Dorsolateral prefrontal cortex (tissue), 120 donors: ENCODE measurements at regions of chr2 and their contacts with region 1.

Region 1: DNA sequence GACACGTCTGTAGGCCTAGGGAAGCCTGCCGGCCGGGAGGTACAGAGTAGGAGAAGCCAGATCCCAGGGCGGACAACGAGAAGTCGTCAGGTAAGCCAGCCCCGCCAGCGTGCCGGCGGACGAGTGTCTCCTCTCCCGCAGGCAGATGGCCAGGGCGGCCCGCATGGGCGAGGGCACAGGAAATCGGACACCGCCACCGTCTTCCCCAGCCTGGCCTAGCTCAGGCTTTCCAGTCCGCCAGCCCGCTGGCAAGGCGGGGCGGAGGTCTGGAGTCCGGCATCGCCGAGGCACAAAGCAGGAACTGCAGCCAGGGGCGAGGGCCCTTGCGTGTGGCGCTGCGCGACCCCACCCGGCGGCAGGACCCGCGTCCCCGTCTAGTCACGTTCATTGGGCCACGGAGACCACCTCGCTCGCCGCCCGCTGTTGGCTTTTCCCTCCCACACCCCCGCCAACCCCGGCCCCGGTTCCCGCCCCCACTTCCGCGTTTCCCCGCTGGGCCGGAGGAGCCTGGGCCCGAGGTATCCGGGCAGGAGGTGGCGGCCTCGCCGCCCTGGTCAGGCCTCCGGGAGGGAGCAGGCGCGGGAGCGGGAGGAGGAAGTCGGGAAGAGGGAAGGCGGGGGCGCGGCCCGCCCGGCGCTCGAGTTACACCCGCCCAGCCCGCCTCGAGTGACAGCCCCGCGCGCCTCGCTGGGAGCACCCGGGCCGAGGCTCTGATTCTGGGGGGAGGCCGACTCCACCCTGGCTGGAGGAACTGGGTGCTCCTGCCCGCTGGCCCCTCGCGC is at the start of gene GPD2:
- DNase-seq: peak; percentile 68 to 90 (median 84)
- H3K4me3 ChIP-seq: peak within 1 kb of the TSS; percentile 58 to 99 (median 84)
- H3K27ac ChIP-seq: peak within 1 kb of the TSS; percentile 87 to 99 (median 97)
- H3K27me3 ChIP-seq: no peaks in the 10 kb centered on the region
- CTCF ChIP-seq: peak in 33 of 56 donors; percentile 2 to 55 (median 27)
- total RNA-seq, gene GPD2: 31.2 to 87.8 (median 46.5) TPM

Region 2: DNA sequence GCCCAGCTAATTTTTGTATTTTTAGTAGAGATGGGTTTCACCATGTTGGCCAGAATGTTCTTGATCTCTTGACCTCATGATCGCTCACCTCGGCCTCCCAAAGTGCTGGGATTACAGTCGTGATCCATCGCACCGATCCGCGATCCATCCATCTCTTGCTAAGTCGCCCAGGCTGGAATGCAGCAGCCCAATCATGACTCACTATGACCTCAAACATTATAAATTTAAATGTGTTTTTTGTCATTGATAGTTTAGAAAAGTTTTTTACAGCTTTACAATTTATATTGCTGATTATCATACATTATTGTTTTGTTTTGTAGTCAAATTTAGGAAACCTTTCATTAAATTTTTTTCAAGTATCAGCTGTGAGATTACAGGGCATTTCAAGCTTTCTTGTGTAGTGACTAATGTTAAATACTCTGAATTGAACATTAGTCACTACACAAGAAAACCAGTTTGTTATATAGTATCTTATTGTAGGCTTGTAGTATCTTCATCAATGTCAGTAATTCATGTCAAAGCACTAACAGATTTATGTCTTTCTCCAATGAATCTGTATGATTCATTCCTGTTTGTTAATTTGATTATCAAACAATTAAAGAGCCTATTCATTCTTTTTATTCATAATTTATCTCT is 140.8 kb before region 1 on chr2:
- intact Hi-C with region 1: no loop called
- DNase-seq: no peak
- H3K4me3 ChIP-seq: no peak overlapping the region
- H3K27ac ChIP-seq: no peak overlapping the region
- H3K27me3 ChIP-seq: peaks cover 0 to 11% (median 0%) of the 10 kb centered on the region in 45 donors
- CTCF ChIP-seq: no peak

Region 3: DNA sequence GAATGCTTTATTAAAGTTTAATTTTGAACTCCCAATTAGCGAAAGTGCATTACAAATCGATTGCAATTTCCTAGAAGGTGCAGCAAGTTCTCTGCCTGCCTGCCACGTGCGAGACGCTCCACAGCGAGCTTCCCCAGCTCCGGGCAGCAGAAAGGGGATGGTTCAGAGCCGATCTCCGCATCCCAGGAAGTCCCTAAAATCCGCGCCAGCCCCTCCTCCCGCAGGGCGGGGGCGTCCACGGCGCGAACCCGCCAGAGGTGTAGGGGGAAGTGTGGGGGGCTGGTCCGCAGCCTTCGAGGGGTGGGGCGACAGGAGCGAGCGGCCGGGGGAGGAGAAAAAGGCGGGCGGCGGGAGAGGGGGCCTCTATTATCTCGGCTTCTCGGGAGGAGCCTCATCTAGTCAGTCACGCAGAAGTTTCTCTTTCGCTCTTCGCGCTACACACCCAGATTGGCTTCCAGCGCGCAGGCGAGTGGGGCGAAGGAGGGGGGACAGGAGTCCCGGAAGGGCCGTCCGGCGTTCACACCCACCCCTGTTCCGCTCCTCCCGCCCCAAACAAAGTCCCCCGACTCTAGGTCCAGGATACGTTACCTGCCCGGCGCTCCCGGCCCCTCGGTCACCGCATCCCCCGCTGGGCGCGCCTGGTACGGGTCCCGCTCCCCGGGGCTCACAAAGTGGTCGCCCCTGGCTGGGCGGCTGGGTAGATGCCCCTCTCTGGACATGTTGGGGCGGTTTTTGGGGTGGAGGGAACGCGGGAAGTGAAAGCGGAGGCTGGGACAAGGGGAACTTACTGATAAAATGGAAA is 94.3 kb before region 1 on chr2:
- intact Hi-C with region 1: loop called in 1 of 2 experiments (anchors 2 kb)
- DNase-seq: peak; percentile 61 to 87 (median 82)
- H3K4me3 ChIP-seq: peak overlapping the region; percentile 69 to 97 (median 87)
- H3K27ac ChIP-seq: peak overlapping the region; percentile 94 to 100 (median 100)
- H3K27me3 ChIP-seq: no peaks in the 10 kb centered on the region
- CTCF ChIP-seq: peak in 6 of 56 donors; percentile 1 to 14 (median 8)

Region 4: GRCh38 chr2:156400706-156401678 is 34.9 kb before region 1 on chr2:
- intact Hi-C with region 1: loop called (anchors 1 kb)
- DNase-seq: peak; percentile 62 to 81 (median 68)
- H3K4me3 ChIP-seq: peak overlapping the region; percentile 56 to 98 (median 76)
- H3K27ac ChIP-seq: peak overlapping the region; percentile 81 to 100 (median 98)
- H3K27me3 ChIP-seq: no peaks in the 10 kb centered on the region
- CTCF ChIP-seq: peak in 5 of 56 donors; percentile 5 to 15 (median 8)

Region 5: GRCh38 chr2:156472686-156473085 is 36.8 kb after region 1 on chr2:
- intact Hi-C with region 1: loop called in 1 of 2 experiments (anchors 5 kb)
- DNase-seq: no peak
- H3K4me3 ChIP-seq: no peak overlapping the region
- H3K27ac ChIP-seq: no peak overlapping the region
- H3K27me3 ChIP-seq: no peaks in the 10 kb centered on the region
- CTCF ChIP-seq: no peak

Region 6: GRCh38 chr2:157911750-157912149 is 1475.8 kb after region 1 on chr2:
- intact Hi-C with region 1: no loop called
- DNase-seq: no peak
- H3K4me3 ChIP-seq: no peak overlapping the region
- H3K27ac ChIP-seq: no peak overlapping the region
- H3K27me3 ChIP-seq: no peaks in the 10 kb centered on the region
- CTCF ChIP-seq: no peak